CD4-positive, alpha-beta T cell (primary cell): ENCODE measurements at regions of chr2 and their contacts with region 1.

Region 1: GRCh38 chr2:160406591-160407392 is 86.8 kb downstream of the RBMS1 start:
- DNase-seq: peak; percentile 57 to 97 (median 68)
- ATAC-seq: peak; percentile 84
- H3K4me3 ChIP-seq: peak overlapping the region; percentile 73
- H3K4me3 Mint-ChIP-seq: peak overlapping the region; percentile 89
- H3K27ac ChIP-seq: peak overlapping the region; percentile 55 to 96
- H3K27ac Mint-ChIP-seq: peak overlapping the region; percentile 90
- H3K4me1 ChIP-seq: peaks cover 55% of the 10 kb centered on the region
- H3K4me1 Mint-ChIP-seq: peaks cover 86% of the 10 kb centered on the region
- H3K27me3 ChIP-seq: no peaks in the 10 kb centered on the region
- H3K27me3 Mint-ChIP-seq: no peaks in the 10 kb centered on the region
- CTCF ChIP-seq: no peak

Region 2: GRCh38 chr2:160387558-160388262 is 19.1 kb before region 1 on chr2:
- CTCF ChIA-PET with region 1: no interaction called
- POLR2A ChIA-PET with region 1: interaction called, 18 read pairs
- intact Hi-C with region 1: loop called in 1 of 2 experiments (anchors 2 kb)
- DNase-seq: no peak
- ATAC-seq: peak; percentile 45
- H3K4me3 ChIP-seq: no peak overlapping the region
- H3K4me3 Mint-ChIP-seq: peak overlapping the region; percentile 54
- H3K27ac ChIP-seq: no peak overlapping the region
- H3K27ac Mint-ChIP-seq: peak overlapping the region; percentile 67
- H3K4me1 ChIP-seq: peaks cover 70% of the 10 kb centered on the region
- H3K4me1 Mint-ChIP-seq: peaks cover 93% of the 10 kb centered on the region
- H3K27me3 ChIP-seq: no peaks in the 10 kb centered on the region
- H3K27me3 Mint-ChIP-seq: no peaks in the 10 kb centered on the region
- CTCF ChIP-seq: no peak

Region 3: GRCh38 chr2:160429248-160430000 is 22.6 kb after region 1 on chr2:
- CTCF ChIA-PET with region 1: interaction called, 13 read pairs
- POLR2A ChIA-PET with region 1: interaction called, 65 read pairs
- intact Hi-C with region 1: loop called in 1 of 2 experiments (anchors 2 kb)
- DNase-seq: peak in 3 of 14 experiments; percentile 79 to 81 (median 81)
- ATAC-seq: peak; percentile 42
- H3K4me3 ChIP-seq: no peak overlapping the region
- H3K4me3 Mint-ChIP-seq: peak overlapping the region; percentile 12
- H3K27ac ChIP-seq: peak overlapping the region in 1 of 2 donors; percentile 58
- H3K27ac Mint-ChIP-seq: peak overlapping the region; percentile 88
- H3K4me1 ChIP-seq: peaks cover 17% of the 10 kb centered on the region
- H3K4me1 Mint-ChIP-seq: peaks cover 80% of the 10 kb centered on the region
- H3K27me3 ChIP-seq: no peaks in the 10 kb centered on the region
- H3K27me3 Mint-ChIP-seq: no peaks in the 10 kb centered on the region
- CTCF ChIP-seq: peak; percentile 78

Region 4: GRCh38 chr2:160493227-160494028 is 86.6 kb after region 1 on chr2 and contains the start of gene RBMS1:
- CTCF ChIA-PET with region 1: no interaction called
- POLR2A ChIA-PET with region 1: interaction called, 6 read pairs
- intact Hi-C with region 1: loop called (anchors 2 to 5 kb)
- DNase-seq: peak; percentile 25 to 79 (median 47)
- ATAC-seq: peak; percentile 51
- H3K4me3 ChIP-seq: peak within 1 kb of the TSS; percentile 66
- H3K4me3 Mint-ChIP-seq: peak within 1 kb of the TSS; percentile 98
- H3K27ac ChIP-seq: peak within 1 kb of the TSS; percentile 65 to 90
- H3K27ac Mint-ChIP-seq: peak within 1 kb of the TSS; percentile 88
- H3K4me1 ChIP-seq: peaks cover 12% of the 10 kb centered on the region
- H3K4me1 Mint-ChIP-seq: peaks cover 58% of the 10 kb centered on the region
- H3K27me3 ChIP-seq: no peaks in the 10 kb centered on the region
- H3K27me3 Mint-ChIP-seq: no peaks in the 10 kb centered on the region
- CTCF ChIP-seq: no peak
- total RNA-seq, gene RBMS1: 88.6 to 90.3 TPM

Region 5: DNA sequence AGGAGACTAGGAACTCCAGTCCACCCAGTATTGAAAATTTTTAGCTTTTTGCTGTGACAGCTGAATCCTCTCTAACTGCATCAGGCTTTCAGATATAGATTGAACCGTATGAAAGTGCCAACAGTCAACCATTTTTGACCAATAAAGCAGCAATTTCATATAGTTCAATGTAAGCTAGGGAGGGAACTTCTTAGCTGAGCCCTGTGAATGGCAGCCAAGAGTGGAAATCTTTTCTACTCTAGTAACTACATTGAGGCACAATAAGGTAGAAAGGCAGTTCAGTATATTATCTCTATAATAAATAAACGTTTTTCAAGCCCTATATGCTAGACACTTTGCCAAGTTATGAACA is 657.1 kb after region 1 on chr2:
- CTCF ChIA-PET with region 1: no interaction called
- POLR2A ChIA-PET with region 1: no interaction called
- intact Hi-C with region 1: no loop called
- DNase-seq: no peak
- ATAC-seq: peak; percentile 37
- H3K4me3 ChIP-seq: no peak overlapping the region
- H3K4me3 Mint-ChIP-seq: no peak overlapping the region
- H3K27ac ChIP-seq: no peak overlapping the region
- H3K27ac Mint-ChIP-seq: no peak overlapping the region
- H3K4me1 ChIP-seq: peaks cover 4% of the 10 kb centered on the region
- H3K4me1 Mint-ChIP-seq: peaks cover 5% of the 10 kb centered on the region
- H3K27me3 ChIP-seq: no peaks in the 10 kb centered on the region
- H3K27me3 Mint-ChIP-seq: no peaks in the 10 kb centered on the region
- CTCF ChIP-seq: peak; percentile 65

Region 6: DNA sequence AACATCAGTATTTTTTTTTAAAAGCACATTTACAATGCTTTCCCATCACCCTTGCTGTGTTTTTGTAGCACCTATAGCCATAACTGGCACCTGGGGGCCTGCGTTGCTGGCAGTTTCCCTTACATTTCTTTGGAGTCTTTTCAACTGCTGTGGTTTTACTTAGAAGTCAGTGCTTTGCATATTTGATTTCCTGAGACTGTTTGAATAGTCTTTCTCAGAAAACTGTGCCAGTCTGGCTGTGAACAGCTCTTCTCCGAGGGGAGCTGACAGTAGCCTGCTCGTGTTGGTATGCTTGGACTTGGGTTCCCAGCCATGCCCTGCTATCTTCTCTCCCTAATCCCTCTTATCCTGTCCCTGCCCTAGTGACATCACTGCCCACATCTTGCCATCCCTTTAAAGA is 1585.7 kb after region 1 on chr2:
- CTCF ChIA-PET with region 1: no interaction called
- POLR2A ChIA-PET with region 1: no interaction called
- intact Hi-C with region 1: no loop called
- DNase-seq: peak; percentile 18 to 83 (median 44)
- ATAC-seq: peak; percentile 75
- H3K4me3 ChIP-seq: peak overlapping the region; percentile 27
- H3K4me3 Mint-ChIP-seq: peak overlapping the region; percentile 88
- H3K27ac ChIP-seq: peak overlapping the region; percentile 65 to 78
- H3K27ac Mint-ChIP-seq: peak overlapping the region; percentile 94
- H3K4me1 ChIP-seq: peaks cover 34% of the 10 kb centered on the region
- H3K4me1 Mint-ChIP-seq: peaks cover 51% of the 10 kb centered on the region
- H3K27me3 ChIP-seq: no peaks in the 10 kb centered on the region
- H3K27me3 Mint-ChIP-seq: no peaks in the 10 kb centered on the region
- CTCF ChIP-seq: no peak